PC-9 (cell line): ENCODE measurements at regions of chr4 and their contacts with region 1.

Region 1: DNA sequence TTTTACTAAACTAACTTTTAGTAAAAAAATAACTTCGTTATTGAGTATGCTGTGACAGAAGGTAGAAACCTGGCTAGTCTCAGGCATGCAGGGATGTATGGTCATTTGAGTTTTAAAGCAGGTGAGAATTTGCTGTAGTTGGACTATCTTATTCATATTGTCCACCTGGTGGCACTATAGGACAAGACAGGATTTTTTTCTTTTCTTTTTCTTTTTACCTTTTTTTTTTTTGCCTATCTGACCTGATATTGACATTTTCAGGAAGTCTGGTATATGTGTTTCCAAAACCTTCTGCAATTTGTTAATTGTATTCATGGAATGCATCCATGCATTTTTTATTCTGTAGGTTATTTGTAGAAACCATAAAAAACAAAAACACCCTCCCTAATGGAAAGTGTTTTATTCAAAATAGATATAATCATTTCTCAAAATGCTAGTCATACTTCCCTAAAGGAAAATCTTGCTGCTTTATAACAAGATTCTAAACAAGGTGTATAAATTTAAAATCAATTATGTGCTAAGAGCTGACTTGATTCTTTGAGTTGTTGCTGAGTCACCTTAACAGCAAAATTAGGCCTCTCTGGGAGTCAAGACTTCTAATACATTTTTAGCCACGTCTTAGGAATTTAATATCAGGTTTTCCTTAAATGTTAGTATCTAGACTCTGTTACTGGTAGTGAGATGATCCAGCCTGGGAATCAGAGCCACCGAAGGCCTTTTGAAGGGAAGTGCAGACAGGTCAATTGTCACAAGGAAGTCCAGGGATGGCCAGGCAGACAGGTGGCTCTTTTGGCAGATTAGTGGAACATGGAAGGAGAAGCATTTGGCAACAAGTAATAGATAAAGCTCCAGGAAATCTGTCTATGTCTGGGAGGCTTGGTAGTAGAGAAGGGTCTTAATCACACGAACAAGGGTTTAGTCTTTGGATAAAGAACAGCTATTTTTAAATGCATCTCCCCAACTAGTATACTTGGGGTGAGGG is 201.3 kb upstream of the GNPDA2 start:
- DNase-seq: no peak
- H3K4me3 ChIP-seq: no peak overlapping the region
- H3K27ac ChIP-seq: no peak overlapping the region
- H3K4me1 ChIP-seq: no peaks in the 10 kb centered on the region
- H3K27me3 ChIP-seq: no peaks in the 10 kb centered on the region
- CTCF ChIP-seq: peak; percentile 68

Region 2: DNA sequence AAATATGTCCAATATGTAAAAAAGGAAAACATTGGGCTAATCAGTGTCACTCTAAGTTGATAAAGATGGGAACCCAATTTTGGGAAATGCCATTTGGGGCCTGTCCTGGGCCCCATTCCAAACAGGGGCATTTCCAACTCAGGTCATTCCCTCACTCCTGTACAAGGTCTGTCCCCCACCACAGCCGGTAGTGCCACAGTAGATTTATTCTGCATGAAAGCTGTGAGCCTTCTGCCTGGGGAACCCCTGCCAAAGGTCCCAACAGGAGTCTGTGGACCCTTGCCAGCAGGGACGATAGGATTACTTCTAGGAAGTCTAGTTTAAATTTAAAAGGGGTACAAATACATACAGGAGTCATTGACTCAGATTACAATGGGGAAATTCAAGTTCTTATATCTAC is 116.2 kb after region 1 on chr4:
- CTCF ChIA-PET with region 1: no interaction called
- POLR2A ChIA-PET with region 1: no interaction called
- intact Hi-C with region 1: no loop called
- DNase-seq: no peak
- H3K4me3 ChIP-seq: no peak overlapping the region
- H3K27ac ChIP-seq: no peak overlapping the region
- H3K4me1 ChIP-seq: no peaks in the 10 kb centered on the region
- H3K27me3 ChIP-seq: no peaks in the 10 kb centered on the region
- CTCF ChIP-seq: no peak

Region 3: GRCh38 chr4:45082101-45082500 is 154.4 kb after region 1 on chr4:
- CTCF ChIA-PET with region 1: no interaction called
- POLR2A ChIA-PET with region 1: no interaction called
- intact Hi-C with region 1: loop called (anchors 10 kb)
- DNase-seq: no peak
- H3K4me3 ChIP-seq: no peak overlapping the region
- H3K27ac ChIP-seq: no peak overlapping the region
- H3K4me1 ChIP-seq: no peaks in the 10 kb centered on the region
- H3K27me3 ChIP-seq: no peaks in the 10 kb centered on the region
- CTCF ChIP-seq: no peak

Region 4: DNA sequence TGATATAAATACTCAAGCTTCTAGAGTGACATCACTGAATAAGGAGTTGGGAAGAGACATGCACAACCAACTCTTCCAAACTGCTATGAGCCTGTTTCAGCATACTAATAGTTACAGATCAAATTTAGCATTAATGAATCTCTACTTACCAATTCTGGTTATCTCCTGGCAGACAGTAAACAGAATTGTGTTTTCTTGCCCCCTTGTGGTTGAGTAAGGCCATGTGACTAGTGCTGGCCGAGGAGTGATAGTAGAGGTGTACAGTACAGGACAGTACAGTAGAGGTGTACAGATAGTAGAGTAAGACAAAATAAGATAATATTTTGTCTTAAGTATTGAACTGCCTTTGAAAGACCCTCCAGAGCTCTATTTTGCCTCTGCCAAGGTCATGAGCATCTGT is 514.8 kb after region 1 on chr4:
- CTCF ChIA-PET with region 1: no interaction called
- POLR2A ChIA-PET with region 1: no interaction called
- intact Hi-C with region 1: loop called (anchors 1 kb)
- DNase-seq: no peak
- H3K4me3 ChIP-seq: no peak overlapping the region
- H3K27ac ChIP-seq: no peak overlapping the region
- H3K4me1 ChIP-seq: no peaks in the 10 kb centered on the region
- H3K27me3 ChIP-seq: no peaks in the 10 kb centered on the region
- CTCF ChIP-seq: peak; percentile 52; the same call in 1 of the 2 replicates